ENCODE measurements at regions of chr13 and their contacts with region 1.

Region 1: DNA sequence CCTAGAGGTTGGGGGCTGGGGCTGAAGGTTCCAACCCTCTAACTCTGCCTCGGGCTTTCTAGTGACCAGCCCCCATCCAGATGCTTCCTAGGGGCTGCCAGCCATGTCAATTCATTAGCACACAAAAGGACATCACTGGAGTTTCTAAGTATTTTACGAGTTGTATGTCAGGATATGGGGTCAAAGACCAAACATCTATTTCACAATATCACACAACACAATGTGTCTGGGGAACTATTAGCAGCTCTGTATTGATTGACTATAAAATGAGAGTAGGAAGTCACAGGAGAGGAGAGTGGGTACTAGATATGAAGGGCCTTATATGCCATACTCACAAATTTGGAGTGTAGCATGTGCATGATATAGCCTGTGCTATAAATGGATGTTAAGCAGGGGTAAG is 42.1 kb downstream of the LPAR6 start:
- DNase-seq: no peak
- ATAC-seq: no peak
- H3K4me3 ChIP-seq: no peak overlapping the region
- H3K4me3 Mint-ChIP-seq: no peak overlapping the region
- H3K27ac ChIP-seq: no peak overlapping the region
- H3K27ac Mint-ChIP-seq: no peak overlapping the region
- H3K4me1 ChIP-seq: no peaks in the 10 kb centered on the region
- H3K4me1 Mint-ChIP-seq: peaks cover 0 to 5% (median 0%) of the 10 kb centered on the region in 7 donors
- H3K27me3 ChIP-seq: no peaks in the 10 kb centered on the region
- H3K27me3 Mint-ChIP-seq: no peaks in the 10 kb centered on the region

Region 2: GRCh38 chr13:48165063-48165462 is 205.8 kb before region 1 on chr13:
- CTCF ChIA-PET with region 1: no interaction called
- POLR2A ChIA-PET with region 1: no interaction called
- intact Hi-C with region 1: no loop called
- DNase-seq: no peak
- ATAC-seq: no peak
- H3K4me3 ChIP-seq: no peak overlapping the region
- H3K4me3 Mint-ChIP-seq: no peak overlapping the region
- H3K27ac ChIP-seq: no peak overlapping the region
- H3K27ac Mint-ChIP-seq: no peak overlapping the region
- H3K4me1 ChIP-seq: no peaks in the 10 kb centered on the region
- H3K4me1 Mint-ChIP-seq: peaks cover 11 to 33% (median 22%) of the 10 kb centered on the region in 7 donors
- H3K27me3 ChIP-seq: no peaks in the 10 kb centered on the region
- H3K27me3 Mint-ChIP-seq: peaks cover 0 to 22% (median 0%) of the 10 kb centered on the region in 5 donors

Region 3: GRCh38 chr13:48356750-48357149 is 14.1 kb before region 1 on chr13:
- CTCF ChIA-PET with region 1: no interaction called
- POLR2A ChIA-PET with region 1: no interaction called
- intact Hi-C with region 1: loop called in 1 of 2 experiments (anchors 2 kb)
- DNase-seq: no peak
- ATAC-seq: no peak
- H3K4me3 ChIP-seq: no peak overlapping the region
- H3K4me3 Mint-ChIP-seq: no peak overlapping the region
- H3K27ac ChIP-seq: no peak overlapping the region
- H3K27ac Mint-ChIP-seq: peak overlapping the region in 1 of 9 donors; percentile 7
- H3K4me1 ChIP-seq: no peaks in the 10 kb centered on the region
- H3K4me1 Mint-ChIP-seq: peaks cover 0 to 2% (median 0%) of the 10 kb centered on the region in 7 donors
- H3K27me3 ChIP-seq: no peaks in the 10 kb centered on the region
- H3K27me3 Mint-ChIP-seq: no peaks in the 10 kb centered on the region

Region 4: DNA sequence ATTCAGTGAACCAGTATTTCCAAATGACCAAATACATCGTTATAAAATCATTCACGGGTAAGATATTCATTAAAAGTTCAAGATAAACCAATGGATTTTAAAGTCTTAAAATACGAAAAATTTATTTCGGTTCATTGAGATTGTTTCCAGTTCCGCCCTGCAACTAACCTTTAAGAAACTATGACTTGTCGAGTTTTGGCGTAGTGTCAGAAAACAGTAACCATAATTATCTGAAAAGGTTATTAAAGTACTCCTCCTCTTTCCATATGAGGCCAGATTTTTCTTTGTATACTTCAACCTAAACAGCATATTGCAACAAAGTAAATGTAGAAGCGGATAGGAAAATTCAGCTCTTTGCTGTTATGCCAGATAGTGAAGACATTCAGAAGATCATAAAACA is 16.0 kb after region 1 on chr13:
- CTCF ChIA-PET with region 1: no interaction called
- POLR2A ChIA-PET with region 1: no interaction called
- intact Hi-C with region 1: no loop called
- DNase-seq: no peak
- ATAC-seq: no peak
- H3K4me3 ChIP-seq: no peak overlapping the region
- H3K4me3 Mint-ChIP-seq: no peak overlapping the region
- H3K27ac ChIP-seq: no peak overlapping the region
- H3K27ac Mint-ChIP-seq: no peak overlapping the region
- H3K4me1 ChIP-seq: no peaks in the 10 kb centered on the region
- H3K4me1 Mint-ChIP-seq: peaks cover 0 to 10% (median 6%) of the 10 kb centered on the region in 7 donors
- H3K27me3 ChIP-seq: no peaks in the 10 kb centered on the region
- H3K27me3 Mint-ChIP-seq: no peaks in the 10 kb centered on the region